Sigmoid colon (tissue), 7 donors: ENCODE measurements at regions of chr10 and their contacts with region 1.

Region 1: DNA sequence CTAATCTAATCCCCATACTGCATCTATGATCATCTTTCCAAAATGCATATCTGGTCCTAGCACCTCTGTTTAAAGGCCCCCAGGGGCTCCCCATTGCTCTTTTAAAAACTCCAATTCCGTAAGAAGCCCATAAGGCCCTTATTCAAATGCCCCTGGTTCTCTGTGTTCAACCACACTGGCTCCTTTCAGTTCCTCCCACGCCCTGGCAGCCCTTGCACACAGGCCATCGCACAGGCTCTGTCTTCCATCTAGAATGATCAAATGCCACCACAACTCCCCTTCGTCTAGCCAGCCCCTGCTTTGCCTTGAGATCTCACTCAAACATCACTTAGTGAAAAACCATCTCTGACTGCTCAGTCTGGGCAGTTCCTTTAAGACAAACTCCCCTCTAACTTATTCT is 112.9 kb upstream of the LYZL2 start:
- DNase-seq: no peak
- H3K4me3 ChIP-seq: no peak overlapping the region
- H3K27ac ChIP-seq: peak overlapping the region in 2 of 4 donors; percentile 79 to 83
- H3K4me1 ChIP-seq: peaks cover 0 to 35% (median 18%) of the 10 kb centered on the region in 4 donors
- H3K27me3 ChIP-seq: no peaks in the 10 kb centered on the region
- CTCF ChIP-seq: no peak
- EP300 ChIP-seq: no peak
- POLR2A ChIP-seq: no peak

Region 2: DNA sequence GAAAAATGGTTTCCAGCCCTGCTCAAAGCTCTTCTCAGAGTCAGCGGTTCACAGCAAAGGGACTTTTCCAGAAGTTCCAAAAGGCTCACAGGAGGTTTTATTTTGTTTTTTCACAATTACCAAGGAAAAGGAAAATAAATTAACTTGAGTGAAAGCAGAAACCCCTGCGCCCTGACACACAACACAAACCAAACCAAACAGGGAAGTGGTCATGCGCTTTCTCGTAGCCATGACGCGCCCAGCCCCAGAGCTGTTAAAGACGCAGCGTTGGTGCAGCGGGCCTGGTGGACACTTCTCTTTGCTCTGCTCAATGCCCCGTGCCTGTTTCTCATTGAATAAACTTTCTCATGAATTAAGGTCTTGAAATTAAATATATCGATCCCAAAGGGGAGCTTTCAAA is 21.4 kb after region 1 on chr10:
- intact Hi-C with region 1: loop called (anchors 2 kb)
- DNase-seq: peak; percentile 95
- H3K4me3 ChIP-seq: peak overlapping the region in 2 of 4 donors; percentile 7 to 11
- H3K27ac ChIP-seq: peak overlapping the region in 3 of 4 donors; percentile 82 to 90 (median 87)
- H3K4me1 ChIP-seq: peaks cover 0 to 49% (median 28%) of the 10 kb centered on the region in 4 donors
- H3K27me3 ChIP-seq: no peaks in the 10 kb centered on the region
- CTCF ChIP-seq: no peak
- EP300 ChIP-seq: peak; percentile 80 to 97 (median 94)
- POLR2A ChIP-seq: no peak

Region 3: DNA sequence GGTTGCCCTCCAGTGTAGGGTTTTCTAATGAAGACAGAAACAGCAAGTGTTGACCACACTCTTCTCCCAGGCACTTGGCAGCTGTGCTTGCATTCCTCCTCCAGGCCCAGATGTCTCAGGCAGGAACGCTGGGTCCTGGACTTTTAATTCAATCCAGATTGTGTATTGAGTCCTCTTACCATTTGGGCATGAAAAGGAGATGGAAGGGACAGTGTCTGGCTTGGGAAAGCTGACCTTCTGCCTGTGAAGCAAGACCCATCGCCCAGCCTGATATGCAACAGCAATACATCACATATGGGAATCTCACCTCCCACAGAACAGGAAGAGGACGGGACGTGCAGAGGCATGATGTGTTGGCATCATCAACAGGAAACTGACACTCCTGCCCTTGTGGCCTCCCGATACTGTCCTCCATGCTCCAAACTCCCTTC is 61.4 kb after region 1 on chr10:
- intact Hi-C with region 1: loop called (anchors 2 kb)
- DNase-seq: peak; percentile 90
- H3K4me3 ChIP-seq: no peak overlapping the region
- H3K27ac ChIP-seq: peak overlapping the region; percentile 64 to 94 (median 86)
- H3K4me1 ChIP-seq: peaks cover 3 to 50% (median 21%) of the 10 kb centered on the region in 4 donors
- H3K27me3 ChIP-seq: no peaks in the 10 kb centered on the region
- CTCF ChIP-seq: no peak
- EP300 ChIP-seq: peak in 1 of 4 donors; percentile 12
- POLR2A ChIP-seq: no peak